AG04450 (cell line): ENCODE measurements at regions of chrX and their contacts with region 1.

Region 1: DNA sequence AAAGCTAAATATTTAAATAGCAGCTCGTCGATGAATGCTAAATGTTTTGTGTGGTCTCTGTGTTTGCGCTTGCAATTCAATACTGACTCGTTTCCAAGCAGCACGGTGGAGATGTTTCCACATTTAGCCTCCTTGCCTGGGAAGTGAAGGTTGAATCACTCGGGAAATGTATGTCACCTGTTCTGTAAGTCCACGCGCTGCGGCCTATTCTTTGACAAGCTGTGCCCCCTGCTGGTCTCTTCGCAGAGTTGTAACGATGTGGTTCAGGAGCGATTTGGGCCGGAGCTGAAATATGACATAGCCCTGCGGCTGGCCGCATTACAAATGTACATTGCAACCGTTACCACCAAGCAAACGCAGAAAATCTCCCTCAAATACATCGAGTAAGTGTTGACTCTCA is 89.6 kb upstream of the PRPS2 start:
- DNase-seq: peak; percentile 52
- H3K4me3 ChIP-seq: no peak overlapping the region
- H3K27ac ChIP-seq: no peak overlapping the region
- H3K27me3 ChIP-seq: no peaks in the 10 kb centered on the region
- CTCF ChIP-seq: peak; percentile 68

Region 2: GRCh38 chrX:11758400-11759171 is 943.0 kb before region 1 on chrX:
- CTCF ChIA-PET with region 1: no interaction called
- POLR2A ChIA-PET with region 1: no interaction called
- DNase-seq: peak; percentile 21
- H3K4me3 ChIP-seq: peak overlapping the region; percentile 86
- H3K27ac ChIP-seq: peak overlapping the region; percentile 39
- H3K27me3 ChIP-seq: no peaks in the 10 kb centered on the region
- CTCF ChIP-seq: peak; percentile 48

Region 3: GRCh38 chrX:11787564-11787963 is 914.1 kb before region 1 on chrX:
- CTCF ChIA-PET with region 1: interaction called, 10 read pairs
- POLR2A ChIA-PET with region 1: no interaction called
- DNase-seq: peak; percentile 1
- H3K4me3 ChIP-seq: peak overlapping the region; percentile 10; the same call in 1 of the 2 replicates
- H3K27ac ChIP-seq: no peak overlapping the region
- H3K27me3 ChIP-seq: no peaks in the 10 kb centered on the region
- CTCF ChIP-seq: peak; percentile 58

Region 4: GRCh38 chrX:12690646-12691045 is 11.0 kb before region 1 on chrX:
- CTCF ChIA-PET with region 1: interaction called, 14 read pairs
- POLR2A ChIA-PET with region 1: no interaction called
- DNase-seq: no peak
- H3K4me3 ChIP-seq: no peak overlapping the region
- H3K27ac ChIP-seq: no peak overlapping the region
- H3K27me3 ChIP-seq: no peaks in the 10 kb centered on the region
- CTCF ChIP-seq: no peak

Region 5: DNA sequence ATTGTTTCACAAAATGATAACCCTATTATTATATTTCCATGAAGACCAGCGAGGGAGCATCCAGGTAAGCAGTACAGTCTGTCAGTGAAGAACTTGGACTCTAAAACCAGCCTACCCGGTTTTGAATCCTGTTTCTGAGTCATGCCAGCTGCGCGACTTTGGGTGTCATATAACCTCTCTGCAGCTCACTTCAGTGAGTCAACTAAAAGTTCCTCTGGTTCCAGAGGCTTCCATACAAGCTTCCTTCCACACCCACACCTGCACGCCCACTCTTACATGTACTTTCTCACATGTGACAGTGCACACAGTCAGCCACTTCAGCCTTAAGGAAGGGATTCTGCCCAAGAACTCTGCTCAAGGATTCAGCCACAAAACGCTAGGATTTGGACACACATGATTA is 39.8 kb after region 1 on chrX:
- CTCF ChIA-PET with region 1: no interaction called
- POLR2A ChIA-PET with region 1: no interaction called
- DNase-seq: no peak
- H3K4me3 ChIP-seq: no peak overlapping the region
- H3K27ac ChIP-seq: no peak overlapping the region
- H3K27me3 ChIP-seq: no peaks in the 10 kb centered on the region
- CTCF ChIP-seq: no peak